Testis (tissue), 5 donors: ENCODE measurements at regions of chr11 and their contacts with region 1.

Region 1: DNA sequence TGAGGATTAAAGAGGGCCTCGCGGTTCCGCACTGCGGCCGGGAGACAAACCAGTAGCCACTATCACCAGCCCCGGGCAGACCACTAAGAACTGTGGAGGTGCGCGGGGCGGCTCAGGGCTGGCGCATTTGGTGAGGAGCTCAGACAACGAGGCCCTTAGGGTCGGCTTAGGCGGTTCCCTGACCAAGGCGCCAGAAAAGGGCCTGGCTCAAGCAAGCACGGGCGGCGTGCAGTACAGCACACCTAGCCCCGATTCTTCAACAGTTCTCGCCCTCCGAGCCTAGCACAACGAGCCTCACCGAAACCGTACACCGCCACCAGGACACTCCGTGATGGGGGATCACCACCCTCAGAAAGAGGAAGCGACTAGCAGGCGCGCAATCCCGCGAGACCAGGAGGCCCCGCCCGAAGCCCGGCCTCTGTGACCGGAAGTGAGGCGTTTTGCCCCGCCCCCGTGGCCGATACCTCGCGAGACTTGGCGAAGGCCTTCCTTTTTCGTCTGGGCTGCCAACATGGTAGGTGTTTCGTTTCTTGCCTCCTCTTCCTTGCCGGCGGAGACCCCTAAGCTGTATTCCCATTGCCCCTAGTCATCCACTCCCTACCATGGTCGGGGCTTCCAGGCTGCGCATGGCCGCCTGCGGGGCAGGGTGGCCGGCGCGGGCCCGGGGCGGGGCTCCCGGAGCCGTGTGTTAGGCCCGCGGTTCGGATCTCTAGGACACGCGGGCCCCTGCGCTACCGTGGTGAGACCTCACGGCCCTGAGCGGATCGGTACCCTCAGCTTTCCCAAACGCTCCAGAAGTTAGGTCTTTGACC is at the starts of genes RPL27A and TRIM66:
- DNase-seq: peak; percentile 98
- H3K4me3 ChIP-seq: peak within 1 kb of the TSS; percentile 94 to 100
- H3K27ac ChIP-seq: peak within 1 kb of the TSS; percentile 91 to 93
- H3K4me1 ChIP-seq: peaks cover 8% of the 10 kb centered on the region
- H3K27me3 ChIP-seq: no peaks in the 10 kb centered on the region
- CTCF ChIP-seq: peak in 1 of 3 experiments; percentile 34
- POLR2A ChIP-seq: peak; percentile 79
- total RNA-seq, gene RPL27A: 340 to 586 TPM
- total RNA-seq, gene TRIM66: 37.4 to 49.6 TPM

Region 2: GRCh38 chr11:8911029-8911826 is 228.7 kb after region 1 on chr11 and contains the start of gene AKIP1:
- intact Hi-C with region 1: loop called (anchors 5 kb)
- DNase-seq: peak; percentile 96
- H3K4me3 ChIP-seq: peak within 1 kb of the TSS; percentile 94 to 98
- H3K27ac ChIP-seq: peak within 1 kb of the TSS; percentile 95 to 98
- H3K4me1 ChIP-seq: peaks cover 22% of the 10 kb centered on the region
- H3K27me3 ChIP-seq: no peaks in the 10 kb centered on the region
- CTCF ChIP-seq: no peak
- POLR2A ChIP-seq: no peak
- total RNA-seq, gene AKIP1: 38.5 to 40.4 TPM